B cell (primary cell): ENCODE measurements at regions of chr9 and their contacts with region 1.

Region 1: GRCh38 chr9:15306757-15307534 is at the start of gene TTC39B:
- DNase-seq: peak; percentile 72
- ATAC-seq: peak; percentile 86
- H3K4me3 ChIP-seq: peak within 1 kb of the TSS; percentile 59 to 95 (median 88)
- H3K4me3 Mint-ChIP-seq: peak within 1 kb of the TSS; percentile 96
- H3K27ac ChIP-seq: peak within 1 kb of the TSS; percentile 29 to 78
- H3K27ac Mint-ChIP-seq: peak within 1 kb of the TSS; percentile 89
- H3K4me1 ChIP-seq: peaks cover 25 to 33% of the 10 kb centered on the region in 2 donors
- H3K4me1 Mint-ChIP-seq: peaks cover 31% of the 10 kb centered on the region
- H3K27me3 ChIP-seq: no peaks in the 10 kb centered on the region
- H3K27me3 Mint-ChIP-seq: peaks cover 3% of the 10 kb centered on the region
- CTCF ChIP-seq: no peak
- total RNA-seq, gene TTC39B: 3.6 and 3.8 TPM in 2 replicates

Region 2: GRCh38 chr9:15211160-15211814 is 95.7 kb before region 1 on chr9:
- CTCF ChIA-PET with region 1: interaction called, 4 read pairs
- POLR2A ChIA-PET with region 1: no interaction called
- intact Hi-C with region 1: loop called (anchors 5 kb)
- DNase-seq: peak; percentile 69
- ATAC-seq: peak; percentile 54
- H3K4me3 ChIP-seq: no peak overlapping the region
- H3K4me3 Mint-ChIP-seq: no peak overlapping the region
- H3K27ac ChIP-seq: no peak overlapping the region
- H3K27ac Mint-ChIP-seq: no peak overlapping the region
- H3K4me1 ChIP-seq: no peaks in the 10 kb centered on the region
- H3K4me1 Mint-ChIP-seq: no peaks in the 10 kb centered on the region
- H3K27me3 ChIP-seq: no peaks in the 10 kb centered on the region
- H3K27me3 Mint-ChIP-seq: no peaks in the 10 kb centered on the region
- CTCF ChIP-seq: peak; percentile 96

Region 3: GRCh38 chr9:15289603-15290002 is 17.3 kb before region 1 on chr9:
- CTCF ChIA-PET with region 1: interaction called, 4 read pairs
- POLR2A ChIA-PET with region 1: interaction called, 3 read pairs
- intact Hi-C with region 1: loop called (anchors 2 kb)
- DNase-seq: no peak
- ATAC-seq: no peak
- H3K4me3 ChIP-seq: no peak overlapping the region
- H3K4me3 Mint-ChIP-seq: no peak overlapping the region
- H3K27ac ChIP-seq: no peak overlapping the region
- H3K27ac Mint-ChIP-seq: no peak overlapping the region
- H3K4me1 ChIP-seq: peaks cover 2 to 20% of the 10 kb centered on the region in 2 donors
- H3K4me1 Mint-ChIP-seq: peaks cover 18% of the 10 kb centered on the region
- H3K27me3 ChIP-seq: no peaks in the 10 kb centered on the region
- H3K27me3 Mint-ChIP-seq: no peaks in the 10 kb centered on the region
- CTCF ChIP-seq: no peak

Region 4: DNA sequence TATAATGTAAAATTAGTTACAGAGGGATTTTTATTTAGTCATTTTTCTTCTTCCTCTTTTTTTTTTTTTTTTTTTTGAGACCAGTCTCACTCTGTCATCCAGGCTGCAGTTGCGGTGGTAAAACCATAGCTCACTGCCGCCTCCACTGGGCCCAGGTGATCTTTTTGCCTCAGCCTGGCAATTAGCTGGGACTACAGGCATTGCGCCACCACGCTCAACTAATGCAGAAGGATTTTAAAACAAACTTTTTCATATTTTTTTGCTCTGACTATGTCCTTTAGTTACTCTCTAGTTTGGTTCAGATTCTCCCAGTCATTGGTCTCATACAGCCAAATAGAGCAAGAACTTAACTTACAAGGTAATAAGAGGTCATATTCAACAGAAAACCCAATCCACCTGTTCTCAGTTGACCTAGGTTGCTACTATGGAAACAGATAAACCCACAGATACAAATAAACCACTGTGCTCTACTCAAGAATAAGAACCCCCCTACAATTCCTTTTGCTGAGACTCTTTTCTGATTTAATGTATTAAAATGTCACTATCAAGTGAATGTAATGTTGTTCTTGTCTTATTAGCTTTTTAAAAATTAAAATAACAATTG is 50.2 kb after region 1 on chr9:
- CTCF ChIA-PET with region 1: interaction called, 3 read pairs
- POLR2A ChIA-PET with region 1: no interaction called
- intact Hi-C with region 1: loop called (anchors 5 kb)
- DNase-seq: peak; percentile 76
- ATAC-seq: peak; percentile 78
- H3K4me3 ChIP-seq: no peak overlapping the region
- H3K4me3 Mint-ChIP-seq: no peak overlapping the region
- H3K27ac ChIP-seq: no peak overlapping the region
- H3K27ac Mint-ChIP-seq: no peak overlapping the region
- H3K4me1 ChIP-seq: peaks cover 0 to 8% of the 10 kb centered on the region in 2 donors
- H3K4me1 Mint-ChIP-seq: peaks cover 7% of the 10 kb centered on the region
- H3K27me3 ChIP-seq: no peaks in the 10 kb centered on the region
- H3K27me3 Mint-ChIP-seq: no peaks in the 10 kb centered on the region
- CTCF ChIP-seq: peak; percentile 44

Region 5: DNA sequence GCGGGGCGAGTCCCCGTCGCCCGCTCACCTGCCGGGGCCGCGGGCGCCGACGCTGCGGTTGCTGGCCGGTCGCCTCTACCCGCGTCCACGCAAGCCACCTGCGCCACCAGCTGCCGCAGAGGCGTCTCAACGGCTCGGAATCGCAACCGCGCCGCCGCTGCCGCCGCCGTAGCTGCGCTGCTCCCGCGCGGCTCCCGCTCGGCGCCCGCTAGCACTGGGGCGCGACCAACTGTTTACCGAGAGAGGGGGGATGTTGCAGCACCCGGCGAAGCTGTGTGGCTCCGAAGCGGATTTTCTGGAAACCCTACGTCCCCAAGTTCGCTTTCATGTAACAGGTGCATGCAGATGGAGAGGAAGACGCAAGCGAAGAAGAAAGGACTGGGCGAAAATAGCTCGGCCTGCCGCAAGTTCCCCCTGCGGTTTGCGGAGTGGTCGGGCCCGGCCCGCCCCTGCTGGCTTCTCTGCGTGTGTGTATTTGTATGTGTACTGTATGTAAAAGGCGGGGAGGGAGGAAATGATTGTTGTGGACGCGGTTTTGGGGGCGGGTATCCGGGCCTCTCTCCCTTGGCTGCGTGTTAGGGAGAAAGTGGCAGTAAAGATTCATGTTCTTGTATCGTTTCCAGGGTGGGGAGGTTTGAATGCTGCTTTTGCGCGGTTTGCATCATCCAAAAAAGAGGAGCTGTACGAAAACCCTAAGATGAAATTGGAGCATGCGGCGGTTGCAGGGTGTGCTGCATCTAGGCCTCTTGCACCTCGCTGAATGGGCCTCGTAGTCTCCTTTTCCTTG is 204.0 kb after region 1 on chr9 and contains the start of gene PSIP1:
- CTCF ChIA-PET with region 1: no interaction called
- POLR2A ChIA-PET with region 1: no interaction called
- intact Hi-C with region 1: loop called (anchors 2 kb)
- DNase-seq: peak; percentile 95
- ATAC-seq: peak; percentile 79
- H3K4me3 ChIP-seq: peak within 1 kb of the TSS; percentile 60 to 96 (median 94)
- H3K4me3 Mint-ChIP-seq: peak within 1 kb of the TSS; percentile 95
- H3K27ac ChIP-seq: peak within 1 kb of the TSS; percentile 97 to 98
- H3K27ac Mint-ChIP-seq: peak within 1 kb of the TSS; percentile 100
- H3K4me1 ChIP-seq: peaks cover 30 to 40% of the 10 kb centered on the region in 2 donors
- H3K4me1 Mint-ChIP-seq: peaks cover 58% of the 10 kb centered on the region
- H3K27me3 ChIP-seq: no peaks in the 10 kb centered on the region
- H3K27me3 Mint-ChIP-seq: no peaks in the 10 kb centered on the region
- CTCF ChIP-seq: no peak
- total RNA-seq, gene PSIP1: 124 and 134 TPM in 2 replicates